Activated T-helper 2 cell treated with anti-CD3 and anti-CD28 coated beads, Interferon-gamma antibody, Interleukin-2, Interleukin-4, amounts not matched to agents 10 μg/mL and 5 μg/mL and 100 μg/mL, durations not matched to agents 14 hours and 24 hours and 36 hours (primary cell): ENCODE measurements at regions of chr21 and their contacts with region 1.

Region 1: DNA sequence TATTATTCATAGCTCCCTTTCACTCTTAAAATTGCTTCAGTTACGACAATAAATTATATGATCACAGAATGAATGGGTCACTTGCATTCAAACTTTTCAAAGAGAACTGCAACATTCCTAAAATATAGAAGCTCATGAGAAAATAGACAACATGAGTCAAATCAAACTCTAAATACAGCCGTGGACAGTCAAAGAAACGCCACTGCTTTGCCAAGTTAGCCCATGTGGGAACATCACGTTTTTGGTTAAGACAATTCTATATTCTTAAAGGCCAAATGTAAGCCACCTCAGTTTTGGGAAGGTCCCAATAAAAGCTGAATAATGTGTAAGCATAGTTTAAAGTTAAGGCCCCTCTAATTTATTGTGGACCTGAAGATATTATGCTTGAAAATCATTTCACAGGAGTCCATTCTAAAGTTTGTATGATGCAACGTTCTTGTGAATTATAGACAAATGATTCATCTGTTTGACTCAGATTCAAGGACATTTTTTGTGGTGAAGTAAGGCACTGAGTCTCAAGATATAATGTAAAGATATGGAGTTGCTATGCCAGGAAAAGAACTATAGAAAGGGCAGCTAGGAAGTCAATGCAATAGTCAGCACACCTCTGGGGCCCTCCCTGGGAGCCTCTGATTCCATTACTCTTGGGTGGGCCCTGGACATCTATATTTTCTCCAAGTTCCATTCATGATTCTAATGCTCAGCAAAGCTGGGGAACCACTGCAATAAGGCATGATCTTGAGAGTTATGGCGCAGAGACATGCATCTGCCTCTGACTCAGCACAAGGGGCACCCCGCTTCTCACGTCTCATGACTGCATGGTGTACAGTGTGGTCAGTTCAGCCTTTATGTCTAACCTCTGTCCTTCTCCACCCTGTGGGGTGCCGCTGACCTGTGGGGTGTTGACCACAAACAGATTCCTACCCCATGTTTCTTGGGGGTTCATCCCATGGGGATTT is 33.9 kb downstream of the ETS2 start:
- DNase-seq: no peak
- H3K4me3 Mint-ChIP-seq: no peak overlapping the region
- H3K27ac Mint-ChIP-seq: peak overlapping the region; percentile 65
- H3K4me1 Mint-ChIP-seq: peaks cover 36% of the 10 kb centered on the region
- H3K27me3 Mint-ChIP-seq: no peaks in the 10 kb centered on the region

Region 2: GRCh38 chr21:38333301-38334272 is 506.0 kb before region 1 on chr21:
- intact Hi-C with region 1: no loop called
- DNase-seq: no peak
- H3K4me3 Mint-ChIP-seq: no peak overlapping the region
- H3K27ac Mint-ChIP-seq: no peak overlapping the region
- H3K4me1 Mint-ChIP-seq: no peaks in the 10 kb centered on the region
- H3K27me3 Mint-ChIP-seq: no peaks in the 10 kb centered on the region

Region 3: DNA sequence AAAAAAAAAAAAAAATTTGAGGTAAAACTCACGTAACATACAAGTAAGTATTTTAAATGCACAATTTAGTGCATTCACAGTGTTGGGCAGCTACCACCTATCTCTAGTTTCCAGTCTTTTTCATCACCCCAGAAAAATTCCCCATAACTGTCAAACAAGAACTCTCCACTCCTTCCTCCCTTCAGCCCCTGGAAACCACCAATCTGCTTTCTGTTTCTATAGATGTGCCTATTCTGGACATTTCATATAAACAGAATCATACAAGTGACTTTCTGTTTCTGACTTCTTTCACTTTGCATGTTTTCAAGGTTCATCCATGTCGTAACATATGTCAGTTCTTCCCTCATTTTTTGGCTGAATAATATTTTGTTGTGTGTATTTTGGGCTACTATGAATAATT is 58.7 kb before region 1 on chr21:
- intact Hi-C with region 1: loop called (anchors 2 kb)
- DNase-seq: peak; percentile 20
- H3K4me3 Mint-ChIP-seq: peak overlapping the region; percentile 23
- H3K27ac Mint-ChIP-seq: peak overlapping the region; percentile 70
- H3K4me1 Mint-ChIP-seq: peaks cover 45% of the 10 kb centered on the region
- H3K27me3 Mint-ChIP-seq: no peaks in the 10 kb centered on the region

Region 4: DNA sequence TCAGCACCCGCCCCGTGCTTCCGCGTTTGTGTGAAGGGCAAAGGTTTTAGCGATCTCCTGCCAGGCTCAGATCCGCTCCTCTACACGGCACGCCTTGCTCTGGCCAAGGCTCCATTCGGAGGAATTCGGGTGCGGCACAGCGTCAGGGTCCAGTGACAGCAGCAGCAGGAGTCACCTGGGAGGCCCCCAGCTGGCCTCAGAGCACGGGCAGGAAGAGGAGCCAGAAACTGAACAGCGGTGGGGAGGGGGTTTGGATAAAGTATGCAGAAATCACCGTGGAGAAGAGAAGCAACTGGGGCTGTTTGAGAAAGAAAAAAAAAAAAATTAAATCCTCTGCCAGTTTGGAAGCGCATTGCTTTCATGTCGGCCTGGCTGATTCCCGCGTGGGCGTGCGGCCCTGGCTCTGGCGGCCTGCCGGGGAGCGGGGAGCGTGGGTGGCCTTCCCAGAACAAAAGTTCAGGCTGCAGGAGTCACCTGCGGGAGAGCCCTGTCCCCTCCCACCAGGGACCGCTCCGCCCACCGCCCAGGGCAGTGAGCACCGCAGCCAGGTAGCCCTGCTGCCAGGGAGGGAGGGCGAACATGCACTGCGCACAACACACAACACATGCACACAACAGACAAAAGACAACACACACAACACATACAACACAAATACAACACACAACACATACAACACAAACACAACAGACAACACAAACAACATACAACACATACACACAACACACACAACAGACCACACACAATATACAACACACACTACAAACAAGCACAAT is 73.7 kb after region 1 on chr21:
- intact Hi-C with region 1: loop called (anchors 5 kb)
- DNase-seq: no peak
- H3K4me3 Mint-ChIP-seq: no peak overlapping the region
- H3K27ac Mint-ChIP-seq: no peak overlapping the region
- H3K4me1 Mint-ChIP-seq: peaks cover 23% of the 10 kb centered on the region
- H3K27me3 Mint-ChIP-seq: peaks cover 1% of the 10 kb centered on the region

Region 5: DNA sequence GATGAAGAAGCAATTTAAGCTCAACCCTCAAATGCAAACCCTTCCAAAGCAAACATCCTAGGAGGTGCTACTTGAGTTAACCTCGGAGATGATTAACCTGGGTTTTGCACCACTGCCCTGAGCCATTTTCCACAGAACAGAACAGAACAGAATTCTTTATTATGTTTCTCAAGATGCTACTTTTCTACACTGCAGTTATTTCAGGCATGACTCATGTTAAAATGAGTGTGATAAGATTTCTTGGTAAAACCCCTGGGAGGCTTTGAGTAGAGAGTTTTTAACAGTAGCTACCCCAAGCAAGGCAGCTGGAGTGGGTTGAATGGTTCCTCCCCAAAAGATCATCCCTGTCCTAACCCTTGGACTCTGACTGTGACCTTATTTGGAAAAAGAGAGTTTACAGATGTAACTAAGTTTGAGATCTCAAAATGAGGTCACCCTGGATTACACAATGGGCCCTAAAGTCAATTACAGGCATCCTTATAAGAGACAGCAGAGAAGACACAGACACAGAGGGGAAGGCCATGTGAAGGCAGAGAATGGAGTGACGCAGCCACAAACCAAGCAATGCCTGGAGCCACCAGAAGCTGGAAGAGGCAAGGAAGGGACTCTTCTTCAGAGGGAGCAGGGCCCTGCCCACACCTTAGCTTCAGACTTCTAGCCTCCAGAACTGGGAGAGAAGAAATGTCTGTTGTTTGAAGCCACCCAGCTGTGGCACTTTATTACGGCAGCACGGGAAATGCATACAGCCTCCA is 119.5 kb after region 1 on chr21:
- intact Hi-C with region 1: loop called (anchors 2 kb)
- DNase-seq: no peak
- H3K4me3 Mint-ChIP-seq: peak overlapping the region; percentile 61
- H3K27ac Mint-ChIP-seq: peak overlapping the region; percentile 96
- H3K4me1 Mint-ChIP-seq: peaks cover 64% of the 10 kb centered on the region
- H3K27me3 Mint-ChIP-seq: no peaks in the 10 kb centered on the region

Region 6: GRCh38 chr21:38979228-38980121 is 139.9 kb after region 1 on chr21:
- intact Hi-C with region 1: loop called (anchors 1 kb)
- DNase-seq: no peak
- H3K4me3 Mint-ChIP-seq: no peak overlapping the region
- H3K27ac Mint-ChIP-seq: peak overlapping the region; percentile 82
- H3K4me1 Mint-ChIP-seq: peaks cover 63% of the 10 kb centered on the region
- H3K27me3 Mint-ChIP-seq: no peaks in the 10 kb centered on the region

Region 7: DNA sequence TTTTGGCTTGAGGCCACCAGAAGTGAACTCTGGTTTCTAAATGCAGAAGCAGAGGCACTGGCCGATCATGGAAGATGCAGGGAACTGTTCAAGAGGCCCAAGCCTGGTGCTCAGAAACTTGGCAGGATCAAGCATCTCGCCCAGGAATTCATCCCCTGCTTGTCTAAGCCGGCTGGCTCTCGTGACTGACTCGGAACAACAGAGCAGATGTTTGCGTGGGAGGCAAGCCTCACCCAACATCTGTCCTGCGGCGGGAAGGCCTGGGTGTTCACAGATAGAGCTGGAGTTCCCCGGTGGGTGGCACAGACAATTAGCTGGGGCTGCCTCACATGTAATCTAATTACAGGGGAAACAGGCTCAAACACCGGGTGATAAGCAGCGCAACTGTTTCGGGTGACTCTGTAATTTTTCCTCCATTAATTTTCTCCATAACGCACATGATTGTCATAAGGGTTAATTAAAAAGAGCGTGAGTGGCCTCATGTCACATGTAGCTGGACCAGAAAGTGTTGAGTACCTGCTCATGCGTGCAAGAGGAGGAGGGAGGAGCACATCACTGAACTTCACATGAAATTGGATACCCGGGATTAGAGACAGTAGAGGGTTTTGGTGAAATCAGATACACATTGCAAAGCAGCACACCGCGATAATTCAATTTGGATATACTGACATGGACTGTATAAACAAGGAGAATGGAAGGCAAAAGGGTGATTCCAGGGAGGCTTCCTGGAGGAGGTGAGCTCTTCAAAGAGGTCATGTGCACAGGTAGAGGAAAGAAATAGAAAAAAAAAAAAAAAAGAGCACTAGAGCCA is 146.2 kb after region 1 on chr21:
- intact Hi-C with region 1: loop called (anchors 2 kb)
- DNase-seq: peak; percentile 72
- H3K4me3 Mint-ChIP-seq: peak overlapping the region; percentile 65
- H3K27ac Mint-ChIP-seq: peak overlapping the region; percentile 97
- H3K4me1 Mint-ChIP-seq: peaks cover 67% of the 10 kb centered on the region
- H3K27me3 Mint-ChIP-seq: no peaks in the 10 kb centered on the region